Caco-2 (cell line): ENCODE measurements at regions of chr17 and their contacts with region 1.

Region 1: DNA sequence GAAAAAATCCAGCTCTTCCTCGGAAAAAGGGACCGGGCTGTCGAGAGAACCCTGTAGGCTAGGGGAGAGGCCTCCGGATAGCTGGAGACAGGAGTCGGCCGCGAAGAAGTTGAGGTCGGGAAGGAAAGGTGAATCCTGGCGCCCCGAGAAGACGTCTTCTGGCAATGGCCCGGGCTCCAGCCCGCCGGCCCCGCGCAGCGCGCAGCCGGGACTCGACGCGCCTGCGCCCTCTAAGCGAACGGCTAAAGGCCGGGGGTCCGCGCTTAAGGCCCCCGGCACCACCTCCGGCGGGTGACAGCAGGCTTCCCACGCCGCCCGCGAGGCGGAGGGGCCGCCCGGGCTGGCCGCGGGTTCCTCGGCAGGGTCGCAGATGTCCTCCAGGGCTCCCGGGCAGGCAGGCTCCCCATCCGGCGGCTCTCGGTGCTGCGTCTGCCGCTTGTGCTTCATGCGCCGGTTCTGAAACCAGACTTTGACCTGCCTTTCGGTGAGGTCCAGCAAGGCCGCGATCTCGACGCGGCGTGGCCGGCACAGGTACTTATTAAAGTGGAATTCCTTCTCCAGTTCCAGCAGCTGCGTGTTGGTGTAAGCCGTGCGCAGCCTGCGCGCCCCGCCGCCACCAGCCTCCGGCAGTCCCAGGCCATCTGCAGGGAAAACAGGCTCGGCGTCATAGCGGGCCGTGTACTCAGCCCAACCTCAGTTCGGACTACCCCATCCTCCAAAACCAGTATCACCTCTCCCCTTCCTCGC is 1.6 kb downstream of the HOXB2 start:
- DNase-seq: peak; percentile 92
- H3K4me3 ChIP-seq: peak overlapping the region; percentile 55
- H3K4me3 Mint-ChIP-seq: peak overlapping the region; percentile 78
- H3K27ac Mint-ChIP-seq: peak overlapping the region; percentile 31
- H3K4me1 ChIP-seq: peaks cover 10% of the 10 kb centered on the region; the same call in 1 of the 2 replicates
- H3K4me1 Mint-ChIP-seq: peaks cover 11% of the 10 kb centered on the region
- H3K27me3 ChIP-seq: no peaks in the 10 kb centered on the region
- H3K27me3 Mint-ChIP-seq: peaks cover 8% of the 10 kb centered on the region
- CTCF ChIP-seq: peak; percentile 68 to 70

Region 2: GRCh38 chr17:48492401-48493298 is 50.6 kb before region 1 on chr17:
- CTCF ChIA-PET with region 1: interaction called, 6 read pairs
- POLR2A ChIA-PET with region 1: interaction called, 7 read pairs
- intact Hi-C with region 1: loop called (anchors 2 kb)
- DNase-seq: peak; percentile 80 to 91
- H3K4me3 ChIP-seq: peak overlapping the region; percentile 15
- H3K4me3 Mint-ChIP-seq: peak overlapping the region; percentile 52
- H3K27ac Mint-ChIP-seq: no peak overlapping the region
- H3K4me1 ChIP-seq: peaks cover 14% of the 10 kb centered on the region
- H3K4me1 Mint-ChIP-seq: peaks cover 9% of the 10 kb centered on the region
- H3K27me3 ChIP-seq: peaks cover 5% of the 10 kb centered on the region; the same call in 1 of the 2 replicates
- H3K27me3 Mint-ChIP-seq: peaks cover 8% of the 10 kb centered on the region
- CTCF ChIP-seq: peak; percentile 99

Region 3: DNA sequence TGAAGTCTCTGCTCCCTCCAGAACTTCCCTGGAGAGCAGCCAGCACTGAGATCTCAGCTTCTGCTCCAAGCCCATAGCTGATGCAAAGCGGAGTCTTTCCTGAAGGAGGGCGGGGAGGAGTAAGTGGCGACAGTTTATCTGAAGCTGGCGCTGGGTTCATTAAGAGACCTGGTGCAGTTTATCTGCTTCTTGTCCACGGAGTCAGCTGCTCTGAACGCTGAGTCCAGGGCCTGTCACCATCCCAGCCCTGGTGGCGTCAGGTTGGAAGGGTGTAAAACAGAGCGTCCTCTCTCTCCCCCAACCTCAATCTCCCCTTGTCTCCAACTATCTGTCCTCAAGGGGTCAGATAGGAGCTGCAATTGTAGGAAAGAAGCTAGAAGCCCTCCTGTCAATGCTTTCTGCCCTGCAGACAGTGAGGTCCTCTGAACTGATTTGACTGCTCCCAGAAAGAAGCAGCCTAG is 42.3 kb before region 1 on chr17:
- CTCF ChIA-PET with region 1: interaction called, 7 read pairs
- POLR2A ChIA-PET with region 1: no interaction called
- intact Hi-C with region 1: loop called (anchors 1 kb)
- DNase-seq: peak in 1 of 2 experiments; percentile 48
- H3K4me3 ChIP-seq: no peak overlapping the region
- H3K4me3 Mint-ChIP-seq: no peak overlapping the region
- H3K27ac Mint-ChIP-seq: no peak overlapping the region
- H3K4me1 ChIP-seq: peaks cover 39% of the 10 kb centered on the region
- H3K4me1 Mint-ChIP-seq: peaks cover 46% of the 10 kb centered on the region
- H3K27me3 ChIP-seq: no peaks in the 10 kb centered on the region
- H3K27me3 Mint-ChIP-seq: peaks cover 3% of the 10 kb centered on the region
- CTCF ChIP-seq: peak; percentile 22 to 62

Region 4: GRCh38 chr17:48522031-48522653 is 21.1 kb before region 1 on chr17:
- CTCF ChIA-PET with region 1: no interaction called
- POLR2A ChIA-PET with region 1: no interaction called
- intact Hi-C with region 1: loop called (anchors 2 kb)
- DNase-seq: peak; percentile 76 to 91
- H3K4me3 ChIP-seq: no peak overlapping the region
- H3K4me3 Mint-ChIP-seq: peak overlapping the region; percentile 8
- H3K27ac Mint-ChIP-seq: no peak overlapping the region
- H3K4me1 ChIP-seq: peaks cover 35% of the 10 kb centered on the region
- H3K4me1 Mint-ChIP-seq: peaks cover 26% of the 10 kb centered on the region
- H3K27me3 ChIP-seq: no peaks in the 10 kb centered on the region
- H3K27me3 Mint-ChIP-seq: peaks cover 4% of the 10 kb centered on the region
- CTCF ChIP-seq: no peak

Region 5: GRCh38 chr17:48532261-48532660 is 11.0 kb before region 1 on chr17:
- CTCF ChIA-PET with region 1: no interaction called
- POLR2A ChIA-PET with region 1: no interaction called
- intact Hi-C with region 1: no loop called
- DNase-seq: peak in 1 of 2 experiments; percentile 76
- H3K4me3 ChIP-seq: no peak overlapping the region
- H3K4me3 Mint-ChIP-seq: no peak overlapping the region
- H3K27ac Mint-ChIP-seq: no peak overlapping the region
- H3K4me1 ChIP-seq: peaks cover 23% of the 10 kb centered on the region
- H3K4me1 Mint-ChIP-seq: no peaks in the 10 kb centered on the region
- H3K27me3 ChIP-seq: no peaks in the 10 kb centered on the region
- H3K27me3 Mint-ChIP-seq: no peaks in the 10 kb centered on the region
- CTCF ChIP-seq: no peak